ENCODE measurements at regions of chr21 and their contacts with region 1.

Region 1: DNA sequence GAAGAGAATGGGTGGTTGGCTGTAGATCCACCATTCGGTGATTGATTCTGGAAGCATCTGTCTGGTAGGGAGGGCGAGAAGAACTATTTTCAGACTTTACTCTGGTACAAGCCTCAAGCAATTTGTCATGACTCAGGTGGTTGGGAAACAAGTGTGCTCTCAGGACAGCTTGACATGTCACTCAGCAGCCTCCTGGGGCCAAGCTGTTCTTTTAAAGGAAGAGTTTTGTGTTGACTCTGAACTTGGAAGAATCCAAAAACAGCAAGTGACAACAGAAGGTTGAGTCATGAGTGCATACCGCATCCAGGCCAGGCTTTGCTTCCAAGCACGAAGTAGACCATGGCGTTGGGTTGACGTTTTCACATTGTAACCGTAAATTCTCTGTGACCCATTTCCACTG is 65.9 kb downstream of the CLIC6 start:
- DNase-seq: no peak
- H3K4me3 ChIP-seq: no peak overlapping the region
- H3K27ac ChIP-seq: peak overlapping the region in 3 of 4 donors; percentile 5 to 34 (median 30)
- H3K4me1 ChIP-seq: peaks cover 0 to 68% (median 0%) of the 10 kb centered on the region in 3 donors
- H3K27me3 ChIP-seq: no peaks in the 10 kb centered on the region
- CTCF ChIP-seq: no peak
- POLR2A ChIP-seq: no peak

Region 2: DNA sequence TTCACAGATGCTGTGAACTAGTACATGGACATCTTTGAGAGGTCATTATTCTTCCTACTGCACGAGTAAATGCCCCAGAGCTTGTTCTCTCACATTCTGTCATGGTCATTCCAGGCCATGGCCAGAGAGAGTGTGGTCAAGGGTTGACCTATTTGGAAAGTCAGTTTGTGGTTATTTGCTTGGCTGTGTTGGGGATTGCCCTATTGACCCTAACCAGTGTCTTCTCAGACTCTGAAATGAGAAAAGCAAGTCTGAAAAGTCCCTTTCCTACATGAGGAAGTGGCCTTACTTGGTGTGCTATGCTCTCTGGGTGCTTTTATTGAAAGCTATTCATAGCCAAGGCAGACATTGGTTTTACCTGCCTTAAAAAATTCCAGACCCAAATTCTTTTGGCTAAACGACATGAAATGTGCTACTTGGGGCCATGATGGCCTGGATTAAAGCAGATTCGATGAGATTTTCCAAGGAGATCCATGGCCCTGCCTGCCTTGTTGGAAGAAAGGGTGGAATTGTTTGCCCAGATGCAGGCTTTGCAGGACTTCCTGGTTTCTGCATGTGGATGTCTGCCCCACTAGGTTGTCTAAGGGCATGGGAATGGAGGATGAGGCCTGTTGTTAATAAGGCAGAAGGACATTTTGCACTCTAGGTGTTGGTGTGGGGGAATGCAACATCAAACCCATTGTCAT is 39.1 kb before region 1 on chr21:
- intact Hi-C with region 1: loop called (anchors 5 kb)
- DNase-seq: no peak
- H3K4me3 ChIP-seq: no peak overlapping the region
- H3K27ac ChIP-seq: no peak overlapping the region
- H3K4me1 ChIP-seq: peaks cover 4 to 31% (median 4%) of the 10 kb centered on the region in 3 donors
- H3K27me3 ChIP-seq: no peaks in the 10 kb centered on the region
- CTCF ChIP-seq: no peak
- POLR2A ChIP-seq: no peak

Measured in esophagus squamous epithelium (tissue), 5 donors.